Endothelial cell of umbilical vein (primary cell): ENCODE measurements at regions of chr11 and their contacts with region 1.

Region 1: DNA sequence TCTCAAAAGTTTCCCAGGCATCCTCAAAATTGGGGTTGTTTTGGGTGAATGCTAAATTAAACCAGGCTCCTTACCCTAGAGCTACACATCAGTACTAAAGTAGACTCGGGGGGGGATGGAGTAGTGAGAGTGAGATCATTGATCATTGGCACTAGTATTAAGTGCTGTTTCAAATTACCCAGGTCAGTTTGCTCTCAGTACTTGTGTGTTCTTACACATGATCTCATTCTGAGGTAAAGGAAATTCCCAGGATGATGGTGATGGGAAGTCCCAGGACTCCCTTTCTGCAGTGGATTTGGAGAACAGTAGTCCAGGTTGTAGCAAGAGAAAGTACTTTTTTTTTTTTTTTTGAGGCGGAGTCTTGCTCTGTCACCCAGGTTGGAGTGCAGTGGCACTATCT is 12.5 kb downstream of the RBM4 start:
- DNase-seq: no peak
- H3K4me3 ChIP-seq: no peak overlapping the region
- H3K27ac ChIP-seq: no peak overlapping the region
- H3K4me1 ChIP-seq: no peaks in the 10 kb centered on the region
- H3K27me3 ChIP-seq: no peaks in the 10 kb centered on the region
- CTCF ChIP-seq: no peak
- POLR2A ChIP-seq: peak; percentile 26

Region 2: GRCh38 chr11:66592457-66593302 is 58.3 kb before region 1 on chr11 and contains the starts of genes CCDC87 and CCS:
- CTCF ChIA-PET with region 1: interaction called, 3 read pairs
- POLR2A ChIA-PET with region 1: no interaction called
- dilution Hi-C with region 1: no loop called
- intact Hi-C with region 1: loop called (anchors 2 kb)
- DNase-seq: peak; percentile 97
- H3K4me3 ChIP-seq: peak within 1 kb of the TSS; percentile 22 to 63 (median 60)
- H3K27ac ChIP-seq: no peak within 1 kb of the TSS
- H3K4me1 ChIP-seq: peaks cover 5% of the 10 kb centered on the region
- H3K27me3 ChIP-seq: peaks cover 0 to 2% of the 10 kb centered on the region in 2 experiments
- CTCF ChIP-seq: peak; percentile 73 to 87
- POLR2A ChIP-seq: peak; percentile 98
- total RNA-seq, gene CCDC87: 0.22 and 0.28 TPM in 2 replicates
- total RNA-seq, gene CCS: 37.2 and 38.7 TPM in 2 replicates

Region 3: GRCh38 chr11:66670816-66671215 is 19.8 kb after region 1 on chr11:
- CTCF ChIA-PET with region 1: no interaction called
- POLR2A ChIA-PET with region 1: no interaction called
- dilution Hi-C with region 1: no loop called
- intact Hi-C with region 1: no loop called
- DNase-seq: no peak
- H3K4me3 ChIP-seq: no peak overlapping the region
- H3K27ac ChIP-seq: no peak overlapping the region
- H3K4me1 ChIP-seq: peaks cover 4% of the 10 kb centered on the region
- H3K27me3 ChIP-seq: no peaks in the 10 kb centered on the region
- CTCF ChIP-seq: no peak
- POLR2A ChIP-seq: peak; percentile 17

Region 4: GRCh38 chr11:66685117-66685802 is 34.2 kb after region 1 on chr11:
- CTCF ChIA-PET with region 1: no interaction called
- POLR2A ChIA-PET with region 1: no interaction called
- dilution Hi-C with region 1: no loop called
- intact Hi-C with region 1: no loop called
- DNase-seq: no peak
- H3K4me3 ChIP-seq: no peak overlapping the region
- H3K27ac ChIP-seq: no peak overlapping the region
- H3K4me1 ChIP-seq: no peaks in the 10 kb centered on the region
- H3K27me3 ChIP-seq: no peaks in the 10 kb centered on the region
- CTCF ChIP-seq: no peak
- POLR2A ChIP-seq: no peak